ENCODE measurements at regions of chr9 and their contacts with region 1.

Region 1: GRCh38 chr9:137406876-137407589 is 15.9 kb downstream of the EXD3 start:
- DNase-seq: peak; percentile 69 to 78 (median 76)
- ATAC-seq: peak; percentile 81
- H3K4me3 ChIP-seq: no peak overlapping the region
- H3K27ac ChIP-seq: peak overlapping the region in 3 of 4 donors; percentile 46 to 63 (median 56)
- H3K4me1 ChIP-seq: peaks cover 27% of the 10 kb centered on the region
- H3K27me3 ChIP-seq: no peaks in the 10 kb centered on the region
- CTCF ChIP-seq: peak; percentile 64 to 91 (median 82)
- POLR2A ChIP-seq: peak in 1 of 3 donors; percentile 26

Region 2: GRCh38 chr9:137280474-137281344 is 126.3 kb before region 1 on chr9:
- intact Hi-C with region 1: loop called (anchors 5 kb)
- DNase-seq: peak in 1 of 4 donors; percentile 13
- ATAC-seq: no peak
- H3K4me3 ChIP-seq: no peak overlapping the region
- H3K27ac ChIP-seq: no peak overlapping the region
- H3K4me1 ChIP-seq: peaks cover 14% of the 10 kb centered on the region
- H3K27me3 ChIP-seq: no peaks in the 10 kb centered on the region
- CTCF ChIP-seq: peak in 2 of 7 experiments; percentile 11 to 17
- POLR2A ChIP-seq: no peak

Region 3: DNA sequence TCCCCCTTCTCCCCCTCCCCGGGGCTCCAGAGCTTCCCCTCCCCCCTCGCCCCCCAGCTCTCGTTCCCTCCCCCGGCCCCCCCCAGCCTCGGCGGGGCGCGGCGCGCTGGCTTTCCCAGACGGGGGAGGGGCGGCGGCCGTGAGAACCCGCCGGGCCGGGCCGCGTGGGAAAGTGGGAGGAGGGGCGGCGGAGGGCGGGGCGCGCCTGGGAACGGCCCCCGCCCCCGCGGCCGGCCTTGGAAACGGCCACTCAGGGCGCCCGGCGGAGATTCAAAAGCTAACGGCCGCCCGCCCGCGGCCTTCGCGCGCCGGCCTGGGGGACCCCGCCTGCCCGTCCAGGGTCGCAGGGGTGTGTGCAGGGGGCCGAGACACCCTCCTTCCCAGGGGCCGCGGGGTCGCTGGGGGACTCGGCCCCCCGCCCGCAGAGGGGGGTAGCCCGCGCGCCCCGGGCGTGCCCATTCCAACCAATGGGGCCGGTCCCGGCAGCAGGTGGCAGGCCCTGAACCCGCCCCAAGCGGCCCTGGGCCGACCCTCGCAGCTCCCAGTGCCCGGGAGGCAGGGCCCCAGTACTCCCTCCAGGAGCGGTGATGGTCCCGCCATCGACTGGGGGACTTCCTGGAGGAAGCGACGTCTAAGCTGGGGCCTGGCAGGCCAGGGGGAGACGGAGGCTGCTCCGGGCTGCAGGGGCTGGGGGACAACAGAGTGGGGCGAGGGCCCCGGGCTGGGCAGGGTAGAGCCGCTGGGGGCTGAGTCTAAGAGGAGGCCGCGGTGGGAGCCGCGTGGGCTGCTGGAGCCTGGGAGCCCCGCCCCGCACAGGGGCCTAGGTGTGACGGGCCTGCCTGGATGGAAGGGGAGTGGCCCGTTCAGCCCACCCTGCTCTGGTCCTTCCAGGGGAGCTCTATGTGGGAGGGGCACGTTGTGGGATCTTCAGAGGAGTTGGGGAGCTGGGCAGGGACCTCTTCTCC is 90.7 kb before region 1 on chr9:
- intact Hi-C with region 1: loop called (anchors 10 kb)
- DNase-seq: peak; percentile 66 to 80 (median 74)
- ATAC-seq: peak; percentile 3
- H3K4me3 ChIP-seq: no peak overlapping the region
- H3K27ac ChIP-seq: peak overlapping the region in 3 of 4 donors; percentile 50 to 100 (median 99)
- H3K4me1 ChIP-seq: peaks cover 69% of the 10 kb centered on the region
- H3K27me3 ChIP-seq: no peaks in the 10 kb centered on the region
- CTCF ChIP-seq: no peak
- POLR2A ChIP-seq: no peak